Endothelial cell of umbilical vein (primary cell): ENCODE measurements at regions of chr16 and their contacts with region 1.

Region 1: GRCh38 chr16:66740010-66740409 is 11.4 kb downstream of the DYNC1LI2 start:
- DNase-seq: peak; percentile 54
- H3K4me3 ChIP-seq: no peak overlapping the region
- H3K27ac ChIP-seq: peak overlapping the region; percentile 97
- H3K4me1 ChIP-seq: peaks cover 34% of the 10 kb centered on the region
- H3K27me3 ChIP-seq: no peaks in the 10 kb centered on the region
- CTCF ChIP-seq: peak; percentile 58 to 60
- POLR2A ChIP-seq: no peak

Region 2: GRCh38 chr16:66414891-66415290 is 325.1 kb before region 1 on chr16:
- CTCF ChIA-PET with region 1: no interaction called
- POLR2A ChIA-PET with region 1: no interaction called
- dilution Hi-C with region 1: no loop called
- intact Hi-C with region 1: no loop called
- DNase-seq: no peak
- H3K4me3 ChIP-seq: no peak overlapping the region
- H3K27ac ChIP-seq: no peak overlapping the region
- H3K4me1 ChIP-seq: no peaks in the 10 kb centered on the region
- H3K27me3 ChIP-seq: peaks cover 2 to 3% of the 10 kb centered on the region in 2 experiments
- CTCF ChIP-seq: no peak
- POLR2A ChIP-seq: no peak

Region 3: DNA sequence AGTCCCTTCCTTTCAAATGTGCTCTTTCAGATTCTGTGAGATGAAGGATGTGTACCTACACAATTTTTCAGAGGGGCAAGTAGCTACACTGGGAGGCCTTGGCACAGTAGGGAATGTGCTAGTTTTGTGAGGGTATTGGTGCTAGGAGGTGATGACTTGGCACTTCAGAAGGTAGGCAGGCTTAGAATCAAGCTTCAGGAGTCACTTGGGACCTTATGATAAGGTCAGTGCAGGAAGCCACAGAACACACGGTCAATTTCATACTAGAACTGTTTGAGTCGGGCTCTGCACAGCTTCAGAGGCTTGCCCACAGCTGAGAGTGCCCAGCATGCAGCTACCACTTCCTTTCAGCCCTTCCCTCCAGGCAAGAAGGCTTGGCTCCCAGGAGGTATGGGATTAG is 167.7 kb before region 1 on chr16:
- CTCF ChIA-PET with region 1: no interaction called
- POLR2A ChIA-PET with region 1: no interaction called
- dilution Hi-C with region 1: no loop called
- intact Hi-C with region 1: no loop called
- DNase-seq: no peak
- H3K4me3 ChIP-seq: no peak overlapping the region
- H3K27ac ChIP-seq: no peak overlapping the region
- H3K4me1 ChIP-seq: peaks cover 27% of the 10 kb centered on the region
- H3K27me3 ChIP-seq: no peaks in the 10 kb centered on the region
- CTCF ChIP-seq: no peak
- POLR2A ChIP-seq: no peak

Region 4: GRCh38 chr16:66650707-66651473 is 89.1 kb before region 1 on chr16:
- CTCF ChIA-PET with region 1: interaction called, 23 read pairs
- POLR2A ChIA-PET with region 1: no interaction called
- dilution Hi-C with region 1: no loop called
- intact Hi-C with region 1: no loop called
- DNase-seq: peak; percentile 81
- H3K4me3 ChIP-seq: no peak overlapping the region
- H3K27ac ChIP-seq: no peak overlapping the region
- H3K4me1 ChIP-seq: no peaks in the 10 kb centered on the region
- H3K27me3 ChIP-seq: no peaks in the 10 kb centered on the region
- CTCF ChIP-seq: peak; percentile 94
- POLR2A ChIP-seq: no peak

Region 5: DNA sequence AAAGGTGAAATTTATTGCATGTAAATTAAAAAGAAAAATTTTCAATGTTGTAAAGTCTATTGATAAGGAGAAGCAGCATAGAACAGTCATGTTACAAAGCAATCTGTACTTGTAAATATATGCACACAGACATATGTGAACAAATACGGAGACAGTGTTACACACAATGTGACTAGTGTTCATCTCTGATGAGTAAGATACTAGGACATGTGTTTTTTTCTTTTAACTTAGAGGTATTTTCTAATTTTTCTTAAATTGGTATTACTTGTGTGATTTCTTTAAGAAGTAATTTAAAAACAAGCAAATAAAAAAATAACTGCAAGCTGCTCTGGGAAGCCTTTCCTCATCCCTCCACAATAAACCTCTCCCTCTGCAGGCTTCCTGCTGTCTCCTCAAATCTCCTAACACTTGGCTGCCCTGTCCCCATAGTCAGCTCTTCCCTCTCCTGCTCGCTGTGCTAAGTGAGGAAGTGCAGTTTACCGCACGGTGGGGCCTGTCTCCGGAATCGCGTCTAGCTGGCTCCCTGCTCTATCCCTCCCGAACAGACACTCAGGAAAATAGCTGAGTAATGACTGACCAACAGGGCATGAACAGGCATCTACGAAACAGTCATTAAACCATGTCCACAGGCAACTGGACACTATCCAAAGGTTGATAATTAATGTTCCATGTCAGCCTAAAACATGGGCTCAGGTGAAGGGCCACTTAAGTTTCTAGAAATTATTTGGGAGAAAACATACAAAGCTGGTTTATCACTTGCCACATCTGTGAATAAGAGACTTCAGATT is 79.4 kb before region 1 on chr16:
- CTCF ChIA-PET with region 1: interaction called, 20 read pairs
- POLR2A ChIA-PET with region 1: no interaction called
- dilution Hi-C with region 1: no loop called
- intact Hi-C with region 1: loop called (anchors 5 kb)
- DNase-seq: peak; percentile 90
- H3K4me3 ChIP-seq: no peak overlapping the region
- H3K27ac ChIP-seq: peak overlapping the region; percentile 49
- H3K4me1 ChIP-seq: peaks cover 25% of the 10 kb centered on the region
- H3K27me3 ChIP-seq: no peaks in the 10 kb centered on the region
- CTCF ChIP-seq: peak in 1 of 2 donors; percentile 25
- POLR2A ChIP-seq: no peak

Region 6: DNA sequence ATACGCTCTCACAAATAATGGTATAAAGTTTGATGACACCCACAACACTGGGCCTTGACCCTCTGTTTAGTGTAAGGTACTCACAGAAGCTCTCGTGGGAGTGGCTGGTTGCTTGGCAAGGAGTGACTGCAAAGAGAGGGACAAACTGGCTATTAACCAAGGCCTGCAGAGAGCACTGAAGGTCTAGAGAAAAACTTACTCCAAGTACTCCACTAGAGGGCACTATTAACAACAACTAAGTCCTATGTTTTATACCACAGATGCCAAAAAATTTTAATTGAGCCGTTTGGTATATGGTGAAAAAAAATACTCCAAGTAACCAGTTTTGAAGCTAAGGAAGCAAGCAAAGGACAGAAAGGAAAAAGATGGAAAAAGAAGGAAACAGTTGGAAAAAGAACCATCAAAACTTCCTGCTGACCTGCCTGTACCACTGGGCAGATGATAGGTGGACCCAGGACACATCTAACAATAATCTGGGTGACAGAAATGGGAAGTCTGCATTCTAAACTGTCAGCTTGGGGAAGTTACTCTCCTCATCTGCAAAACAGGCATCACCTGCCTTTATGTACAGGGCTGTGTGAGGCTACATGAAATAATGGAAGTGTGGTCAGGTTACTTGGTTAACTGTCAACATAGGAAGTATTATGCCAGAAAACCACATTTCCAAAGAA is 11.8 kb before region 1 on chr16:
- CTCF ChIA-PET with region 1: interaction called, 24 read pairs
- POLR2A ChIA-PET with region 1: interaction called, 11 read pairs
- dilution Hi-C with region 1: no loop called
- intact Hi-C with region 1: loop called (anchors 1 kb)
- DNase-seq: peak; percentile 70
- H3K4me3 ChIP-seq: no peak overlapping the region
- H3K27ac ChIP-seq: no peak overlapping the region
- H3K4me1 ChIP-seq: no peaks in the 10 kb centered on the region
- H3K27me3 ChIP-seq: no peaks in the 10 kb centered on the region
- CTCF ChIP-seq: peak; percentile 43 to 48
- POLR2A ChIP-seq: no peak

Region 7: GRCh38 chr16:66751303-66751991 is 11.4 kb after region 1 on chr16 and contains the start of gene DYNC1LI2:
- CTCF ChIA-PET with region 1: interaction called, 69 read pairs
- POLR2A ChIA-PET with region 1: interaction called, 4 read pairs
- dilution Hi-C with region 1: no loop called
- intact Hi-C with region 1: loop called (anchors 1 kb)
- DNase-seq: peak; percentile 60
- H3K4me3 ChIP-seq: peak within 1 kb of the TSS; percentile 87 to 95 (median 92)
- H3K27ac ChIP-seq: peak within 1 kb of the TSS; percentile 95
- H3K4me1 ChIP-seq: peaks cover 20% of the 10 kb centered on the region
- H3K27me3 ChIP-seq: peaks cover 3 to 4% of the 10 kb centered on the region in 2 experiments
- CTCF ChIP-seq: peak; percentile 76 to 86
- POLR2A ChIP-seq: peak; percentile 59
- total RNA-seq, gene DYNC1LI2: 156 and 159 TPM in 2 replicates

Region 8: DNA sequence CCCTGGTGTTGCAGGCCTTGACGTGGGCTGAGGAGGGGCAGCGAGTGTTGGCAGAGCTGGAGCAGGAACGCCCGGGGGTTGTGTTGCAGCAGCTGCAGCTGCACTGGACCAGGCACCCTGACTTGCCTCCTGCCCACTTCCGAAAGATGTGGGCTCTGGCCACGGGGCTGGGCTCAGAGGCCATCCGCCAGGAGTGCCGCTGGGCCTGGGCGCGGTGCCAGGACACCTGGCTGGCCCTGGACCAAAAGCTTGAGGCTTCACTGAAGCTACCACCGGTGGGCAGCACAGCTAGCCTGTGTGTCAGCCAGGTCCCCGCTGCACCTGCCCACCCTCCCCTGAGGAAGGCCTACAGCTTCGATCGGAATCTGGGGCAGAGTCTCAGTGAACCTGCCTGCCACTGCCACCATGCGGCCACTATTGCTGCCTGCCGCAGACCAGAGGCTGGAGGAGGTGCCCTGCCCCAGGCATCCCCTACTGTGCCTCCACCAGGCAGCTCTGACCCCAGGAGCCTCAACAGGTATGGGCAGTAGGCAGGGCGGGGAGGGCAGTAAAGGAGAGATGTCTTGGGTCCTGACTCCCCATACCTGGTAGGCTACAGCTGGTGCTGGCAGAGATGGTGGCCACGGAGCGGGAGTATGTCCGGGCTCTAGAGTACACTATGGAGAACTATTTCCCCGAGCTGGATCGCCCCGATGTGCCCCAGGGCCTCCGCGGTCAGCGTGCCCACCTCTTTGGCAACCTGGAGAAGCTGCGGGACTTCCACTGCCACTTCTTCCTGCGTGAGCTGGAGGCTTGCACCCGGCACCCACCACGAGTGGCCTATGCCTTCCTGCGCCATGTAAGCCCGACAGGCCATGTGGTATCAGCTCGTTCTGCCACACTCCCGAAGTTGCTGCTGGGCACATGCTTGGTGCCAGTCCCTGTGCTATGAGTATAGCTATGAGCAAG is 545.0 kb after region 1 on chr16:
- CTCF ChIA-PET with region 1: no interaction called
- POLR2A ChIA-PET with region 1: no interaction called
- dilution Hi-C with region 1: no loop called
- intact Hi-C with region 1: no loop called
- DNase-seq: peak; percentile 13
- H3K4me3 ChIP-seq: no peak overlapping the region
- H3K27ac ChIP-seq: no peak overlapping the region
- H3K4me1 ChIP-seq: no peaks in the 10 kb centered on the region
- H3K27me3 ChIP-seq: no peaks in the 10 kb centered on the region
- CTCF ChIP-seq: peak; percentile 29 to 65
- POLR2A ChIP-seq: no peak